ENCODE measurements at regions of chr10 and their contacts with region 1.

Region 1: DNA sequence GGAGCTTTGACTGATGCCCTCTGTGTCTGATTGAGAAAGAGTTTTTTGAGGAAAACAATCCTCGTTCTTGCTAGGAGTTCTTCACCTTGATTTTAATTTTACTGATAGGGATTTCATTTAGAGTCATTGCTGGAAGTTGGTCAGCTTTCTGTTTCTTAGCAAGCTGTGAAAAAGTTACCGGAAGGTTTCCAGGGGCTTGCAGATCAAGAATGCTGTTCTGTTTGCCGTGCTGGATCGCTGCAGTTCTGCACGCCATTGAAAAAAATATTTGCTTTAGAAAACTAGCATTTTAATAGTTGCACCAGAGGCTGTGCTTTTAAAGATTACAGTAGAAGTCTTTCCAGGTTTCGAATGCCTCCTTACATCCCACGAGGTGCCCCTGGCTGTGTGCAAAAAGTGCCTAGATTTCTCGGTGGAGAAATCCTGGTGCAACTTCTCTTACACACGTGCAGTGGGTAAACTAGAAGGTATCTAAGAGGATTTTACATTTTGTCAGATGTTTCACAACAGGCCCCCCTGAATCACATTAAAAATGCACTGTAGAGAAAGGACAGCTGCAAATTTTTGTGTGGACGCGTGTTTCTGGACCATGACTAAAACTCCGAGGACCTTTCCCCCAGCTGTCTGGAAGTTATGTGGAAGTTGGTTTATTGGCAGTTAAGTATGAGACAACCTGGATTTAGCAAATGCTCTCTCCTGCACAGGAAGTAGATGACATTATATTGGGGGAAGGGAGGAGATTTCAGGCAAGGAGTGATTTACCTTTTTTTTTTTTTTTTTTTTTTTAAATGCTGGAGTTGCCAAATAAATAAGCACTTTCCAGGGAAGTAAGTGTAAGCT is 5.8 kb downstream of the TCF7L2 start:
- DNase-seq: peak; percentile 88
- ATAC-seq: 0 out of 2 replicates have a peak, but pooled peaks have one; percentile 2
- H3K4me3 ChIP-seq: peak overlapping the region; percentile 33
- H3K27ac ChIP-seq: peak overlapping the region; percentile 68
- H3K4me1 ChIP-seq: peaks cover 25% of the 10 kb centered on the region
- H3K27me3 ChIP-seq: no peaks in the 10 kb centered on the region
- CTCF ChIP-seq: no peak
- POLR2A ChIP-seq: no peak
- RAD21 ChIP-seq: no peak

Region 2: DNA sequence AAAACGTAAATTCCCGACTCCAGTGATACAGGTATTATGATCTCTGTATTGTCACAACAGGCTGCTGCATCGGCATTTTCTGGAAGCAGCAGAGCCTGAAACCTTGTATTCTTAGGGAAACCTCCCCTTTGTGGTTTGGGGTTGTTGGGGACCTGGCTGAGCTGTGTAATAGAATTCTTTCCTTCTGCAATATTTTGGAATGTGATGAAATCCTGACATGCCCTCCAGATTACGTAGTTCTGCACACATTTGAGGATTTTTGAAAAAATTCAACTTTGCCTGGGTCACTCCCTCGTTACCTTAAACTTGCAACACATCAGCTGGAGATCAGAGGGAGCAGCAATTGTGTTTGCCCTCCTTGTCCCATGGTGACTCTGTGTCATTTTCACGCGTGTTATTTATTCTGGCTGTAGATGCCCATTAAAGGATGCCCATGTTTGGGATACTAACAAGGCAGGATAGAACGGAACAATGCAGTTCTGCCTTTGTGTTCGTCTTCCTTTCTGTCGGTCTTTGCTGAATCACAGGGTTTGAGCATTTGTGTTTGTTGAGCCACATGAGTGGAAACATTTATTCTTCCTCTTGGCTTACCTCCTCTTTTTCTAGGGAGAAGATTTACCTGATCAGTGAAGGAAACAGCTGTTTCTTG is 175.9 kb after region 1 on chr10:
- CTCF ChIA-PET with region 1: no interaction called
- POLR2A ChIA-PET with region 1: no interaction called
- dilution Hi-C with region 1: no loop called
- in situ Hi-C with region 1: no loop called
- intact Hi-C with region 1: loop called (anchors 1 kb)
- DNase-seq: peak; percentile 80
- ATAC-seq: peak; percentile 45
- H3K4me3 ChIP-seq: no peak overlapping the region
- H3K27ac ChIP-seq: peak overlapping the region; percentile 64; the same call in 1 of the 2 replicates
- H3K4me1 ChIP-seq: peaks cover 14% of the 10 kb centered on the region
- H3K27me3 ChIP-seq: no peaks in the 10 kb centered on the region
- CTCF ChIP-seq: no peak
- POLR2A ChIP-seq: no peak
- RAD21 ChIP-seq: no peak

Measured in IMR-90 (cell line).